ENCODE measurements at regions of chrX and their contacts with region 1.

Region 1: GRCh38 chrX:63686878-63687714 is 97.9 kb downstream of the ARHGEF9 start:
- DNase-seq: peak; percentile 17
- H3K4me3 Mint-ChIP-seq: no peak overlapping the region
- H3K27ac Mint-ChIP-seq: no peak overlapping the region
- H3K4me1 Mint-ChIP-seq: no peaks in the 10 kb centered on the region
- H3K27me3 Mint-ChIP-seq: no peaks in the 10 kb centered on the region
- CTCF ChIP-seq: peak; percentile 41

Region 2: DNA sequence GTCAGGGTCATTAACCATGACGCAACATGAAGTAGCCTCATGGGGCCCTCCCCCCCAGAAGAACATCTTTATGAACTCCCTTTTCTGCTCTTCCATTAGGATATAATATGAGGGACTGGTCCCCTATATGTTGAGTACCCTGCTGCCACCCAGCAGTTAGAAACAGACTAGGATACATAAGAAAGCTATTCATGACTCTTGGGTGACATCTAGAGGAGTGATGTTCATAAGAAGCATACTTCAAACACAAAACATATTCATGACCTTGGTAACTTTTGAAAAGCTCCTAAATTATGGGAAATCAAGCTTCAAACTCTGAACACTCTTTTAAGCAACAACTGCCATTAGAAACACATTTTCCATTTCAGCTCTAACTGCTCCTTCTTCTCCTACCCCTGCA is 180.8 kb before region 1 on chrX:
- CTCF ChIA-PET with region 1: no interaction called
- intact Hi-C with region 1: loop called (anchors 10 kb)
- DNase-seq: no peak
- H3K4me3 Mint-ChIP-seq: no peak overlapping the region
- H3K27ac Mint-ChIP-seq: no peak overlapping the region
- H3K4me1 Mint-ChIP-seq: peaks cover 8% of the 10 kb centered on the region
- H3K27me3 Mint-ChIP-seq: no peaks in the 10 kb centered on the region
- CTCF ChIP-seq: no peak

Region 3: GRCh38 chrX:63560601-63561218 is 126.4 kb before region 1 on chrX:
- CTCF ChIA-PET with region 1: no interaction called
- intact Hi-C with region 1: loop called (anchors 10 kb)
- DNase-seq: peak; percentile 58
- H3K4me3 Mint-ChIP-seq: peak overlapping the region; percentile 97
- H3K27ac Mint-ChIP-seq: peak overlapping the region; percentile 86
- H3K4me1 Mint-ChIP-seq: no peaks in the 10 kb centered on the region
- H3K27me3 Mint-ChIP-seq: no peaks in the 10 kb centered on the region
- CTCF ChIP-seq: no peak

Region 4: DNA sequence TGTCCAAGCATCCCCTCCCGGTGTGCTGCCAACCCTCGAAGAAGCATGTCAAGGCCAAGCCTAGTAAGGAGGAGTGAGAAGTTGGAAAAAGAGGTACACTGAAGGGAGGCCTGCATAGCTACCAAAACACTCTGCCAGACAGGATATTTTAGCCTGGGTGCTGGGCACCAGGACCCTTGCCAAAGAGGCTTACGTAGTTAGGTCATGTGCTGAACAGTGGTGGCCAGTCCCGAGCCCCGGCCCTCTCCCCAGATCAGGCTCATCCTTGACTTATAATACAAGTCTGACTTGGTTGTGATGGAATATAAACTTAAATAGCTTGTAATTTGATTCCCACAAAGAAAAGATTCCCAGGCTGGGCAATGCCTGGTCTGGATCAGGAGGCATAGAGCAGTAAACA is 51.3 kb before region 1 on chrX:
- CTCF ChIA-PET with region 1: no interaction called
- intact Hi-C with region 1: loop called (anchors 10 kb)
- DNase-seq: no peak
- H3K4me3 Mint-ChIP-seq: no peak overlapping the region
- H3K27ac Mint-ChIP-seq: no peak overlapping the region
- H3K4me1 Mint-ChIP-seq: no peaks in the 10 kb centered on the region
- H3K27me3 Mint-ChIP-seq: no peaks in the 10 kb centered on the region
- CTCF ChIP-seq: no peak

Measured in Calu3 (cell line).